Endothelial cell of umbilical vein (primary cell): ENCODE measurements at regions of chr1 and their contacts with region 1.

Region 1: DNA sequence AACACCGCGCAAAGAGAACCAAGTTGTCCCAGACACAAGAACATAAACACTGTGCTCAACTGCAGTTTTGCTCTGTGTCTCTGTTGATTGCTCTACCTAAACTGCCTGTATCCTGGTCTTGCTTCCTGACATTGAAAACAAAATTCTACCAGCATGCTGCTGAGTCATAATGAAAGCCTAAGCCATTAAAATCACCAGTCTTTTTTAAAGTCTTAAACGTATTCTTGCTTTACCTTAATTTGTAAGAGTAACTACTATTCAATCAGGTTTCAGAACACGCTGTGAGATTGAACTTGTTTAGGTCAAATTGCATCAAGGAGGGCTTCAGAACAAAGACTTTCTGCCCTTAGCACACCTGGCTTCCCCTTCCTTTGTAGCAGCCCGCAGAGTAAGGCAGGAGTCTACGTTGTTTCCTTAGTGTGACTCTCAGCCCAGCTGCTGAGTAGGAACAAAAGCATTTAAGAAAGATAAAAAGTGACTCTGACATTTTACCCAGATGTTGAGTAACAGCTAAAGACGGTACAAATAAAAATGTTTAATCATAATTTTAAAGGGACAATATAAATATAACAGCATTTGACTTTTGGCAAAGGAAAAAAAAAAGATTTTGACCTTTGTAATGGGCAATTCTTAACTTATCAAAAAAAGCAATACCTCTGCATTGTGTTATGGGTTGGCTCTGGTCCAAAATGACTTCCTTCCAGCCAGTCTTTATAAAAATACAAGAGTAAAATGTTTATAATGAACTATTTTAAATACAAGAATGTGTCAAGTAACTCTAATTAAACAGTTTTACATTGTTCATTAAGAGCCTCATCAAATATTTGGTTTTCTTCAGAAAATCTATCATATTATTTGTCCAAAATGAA is 186.9 kb upstream of the ADGRL4 start:
- DNase-seq: peak; percentile 92
- H3K4me3 ChIP-seq: peak overlapping the region in 1 of 3 experiments; percentile 3
- H3K27ac ChIP-seq: peak overlapping the region; percentile 96
- H3K4me1 ChIP-seq: peaks cover 38% of the 10 kb centered on the region
- H3K27me3 ChIP-seq: no peaks in the 10 kb centered on the region
- CTCF ChIP-seq: no peak
- POLR2A ChIP-seq: no peak

Region 2: GRCh38 chr1:78617615-78618026 is 575.8 kb before region 1 on chr1:
- CTCF ChIA-PET with region 1: interaction called, 3 read pairs
- POLR2A ChIA-PET with region 1: no interaction called
- dilution Hi-C with region 1: no loop called
- intact Hi-C with region 1: loop called (anchors 1 kb)
- DNase-seq: peak; percentile 77
- H3K4me3 ChIP-seq: no peak overlapping the region
- H3K27ac ChIP-seq: no peak overlapping the region
- H3K4me1 ChIP-seq: peaks cover 18% of the 10 kb centered on the region
- H3K27me3 ChIP-seq: no peaks in the 10 kb centered on the region
- CTCF ChIP-seq: peak; percentile 67 to 73
- POLR2A ChIP-seq: no peak

Region 3: DNA sequence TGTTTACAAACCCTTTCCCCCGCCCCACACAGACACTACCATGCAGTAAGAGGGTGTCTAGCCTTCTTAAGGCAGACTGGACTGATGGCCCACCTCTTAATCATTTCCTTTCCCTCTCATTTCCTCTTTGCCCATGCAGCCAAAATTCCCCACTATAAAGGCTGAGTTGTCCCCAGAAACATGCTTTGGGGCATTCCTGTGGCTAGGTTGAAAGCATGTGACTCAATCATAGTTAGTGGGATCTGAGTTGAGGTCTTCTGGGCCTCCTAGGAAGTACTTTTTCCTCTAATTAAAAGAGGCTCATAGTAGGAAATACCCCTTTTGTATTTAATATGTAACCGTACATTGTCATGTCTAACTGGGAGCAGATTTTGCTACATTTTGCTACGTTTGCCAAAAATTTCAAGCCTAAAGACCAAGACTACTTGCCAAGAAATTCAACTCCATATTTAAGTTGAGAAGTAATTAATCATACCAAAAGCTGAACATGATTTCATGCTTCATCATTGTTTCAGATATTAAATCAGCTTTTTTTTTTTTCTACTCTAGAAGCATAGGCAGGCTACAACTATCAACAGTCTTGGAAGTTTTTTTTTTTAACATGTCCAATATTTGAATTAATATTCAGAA is 361.6 kb before region 1 on chr1:
- CTCF ChIA-PET with region 1: no interaction called
- POLR2A ChIA-PET with region 1: no interaction called
- dilution Hi-C with region 1: no loop called
- intact Hi-C with region 1: loop called (anchors 1 kb)
- DNase-seq: peak; percentile 78
- H3K4me3 ChIP-seq: no peak overlapping the region
- H3K27ac ChIP-seq: peak overlapping the region; percentile 94
- H3K4me1 ChIP-seq: peaks cover 33% of the 10 kb centered on the region
- H3K27me3 ChIP-seq: no peaks in the 10 kb centered on the region
- CTCF ChIP-seq: no peak
- POLR2A ChIP-seq: no peak

Region 4: GRCh38 chr1:79079770-79080169 is 113.7 kb before region 1 on chr1:
- CTCF ChIA-PET with region 1: no interaction called
- POLR2A ChIA-PET with region 1: no interaction called
- dilution Hi-C with region 1: no loop called
- intact Hi-C with region 1: loop called (anchors 1 kb)
- DNase-seq: peak; percentile 98
- H3K4me3 ChIP-seq: no peak overlapping the region
- H3K27ac ChIP-seq: peak overlapping the region; percentile 81
- H3K4me1 ChIP-seq: peaks cover 37% of the 10 kb centered on the region
- H3K27me3 ChIP-seq: no peaks in the 10 kb centered on the region
- CTCF ChIP-seq: no peak
- POLR2A ChIP-seq: peak; percentile 79

Region 5: DNA sequence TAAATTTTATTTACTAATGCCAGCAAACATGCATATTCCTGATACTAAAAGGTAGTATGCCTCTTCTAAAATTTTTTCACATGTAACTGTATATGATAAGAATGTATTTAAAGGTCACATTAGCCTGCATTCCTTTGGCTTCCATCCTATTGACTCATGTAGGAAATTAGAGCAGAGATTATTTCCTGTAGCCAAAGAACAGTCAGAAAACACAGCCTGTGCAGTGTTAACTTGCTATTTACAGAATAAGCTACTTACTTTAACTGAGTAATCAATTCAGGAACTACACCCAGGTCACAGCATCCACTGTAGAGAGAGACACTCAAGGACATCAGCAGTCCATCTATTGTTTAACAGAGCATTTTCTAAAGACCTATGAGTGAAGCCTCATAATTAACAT is 32.4 kb before region 1 on chr1:
- CTCF ChIA-PET with region 1: interaction called, 8 read pairs
- POLR2A ChIA-PET with region 1: no interaction called
- dilution Hi-C with region 1: no loop called
- intact Hi-C with region 1: loop called (anchors 1 kb)
- DNase-seq: peak; percentile 89
- H3K4me3 ChIP-seq: no peak overlapping the region
- H3K27ac ChIP-seq: peak overlapping the region; percentile 77
- H3K4me1 ChIP-seq: peaks cover 16% of the 10 kb centered on the region
- H3K27me3 ChIP-seq: no peaks in the 10 kb centered on the region
- CTCF ChIP-seq: no peak
- POLR2A ChIP-seq: no peak